Dendritic cell treated with granulocyte-macrophage colony-stimulating factor and Interleukin-4, amounts not matched to agents 40 ng/mL and 50 ng/mL, for 4 days (primary cell): ENCODE measurements at regions of chr1 and their contacts with region 1.

Region 1: GRCh38 chr1:37553927-37554808 is at the start of gene SNIP1:
- H3K4me3 Mint-ChIP-seq: peak within 1 kb of the TSS; percentile 93
- H3K27ac Mint-ChIP-seq: peak within 1 kb of the TSS; percentile 93
- H3K4me1 Mint-ChIP-seq: peaks cover 31% of the 10 kb centered on the region
- H3K27me3 Mint-ChIP-seq: no peaks in the 10 kb centered on the region

Region 2: DNA sequence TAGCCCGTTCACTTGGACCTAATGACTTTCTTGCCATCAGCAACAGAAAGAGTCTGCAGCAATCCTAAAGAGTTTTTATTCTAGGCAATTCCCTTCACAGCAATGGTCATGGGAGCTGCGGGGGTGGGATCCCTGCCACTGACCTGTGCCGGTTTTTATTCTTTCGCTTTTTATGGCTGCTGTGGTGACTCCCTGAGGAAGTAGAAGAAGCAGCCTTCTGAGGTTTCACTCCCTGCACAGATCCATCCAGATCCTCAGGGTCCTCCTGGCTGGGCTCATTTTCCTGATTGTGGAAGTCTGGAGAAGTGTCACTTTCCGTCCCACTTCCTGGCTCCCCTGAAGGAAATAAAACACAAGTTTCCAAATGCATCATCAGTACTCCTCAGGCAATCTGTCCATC is 52.5 kb before region 1 on chr1:
- intact Hi-C with region 1: no loop called
- H3K4me3 Mint-ChIP-seq: no peak overlapping the region
- H3K27ac Mint-ChIP-seq: no peak overlapping the region
- H3K4me1 Mint-ChIP-seq: no peaks in the 10 kb centered on the region
- H3K27me3 Mint-ChIP-seq: no peaks in the 10 kb centered on the region

Region 3: GRCh38 chr1:37514350-37515184 is 39.6 kb before region 1 on chr1 and contains the start of gene MEAF6:
- intact Hi-C with region 1: loop called (anchors 1 kb)
- H3K4me3 Mint-ChIP-seq: peak within 1 kb of the TSS; percentile 96
- H3K27ac Mint-ChIP-seq: peak within 1 kb of the TSS; percentile 98
- H3K4me1 Mint-ChIP-seq: peaks cover 40% of the 10 kb centered on the region
- H3K27me3 Mint-ChIP-seq: no peaks in the 10 kb centered on the region

Region 4: DNA sequence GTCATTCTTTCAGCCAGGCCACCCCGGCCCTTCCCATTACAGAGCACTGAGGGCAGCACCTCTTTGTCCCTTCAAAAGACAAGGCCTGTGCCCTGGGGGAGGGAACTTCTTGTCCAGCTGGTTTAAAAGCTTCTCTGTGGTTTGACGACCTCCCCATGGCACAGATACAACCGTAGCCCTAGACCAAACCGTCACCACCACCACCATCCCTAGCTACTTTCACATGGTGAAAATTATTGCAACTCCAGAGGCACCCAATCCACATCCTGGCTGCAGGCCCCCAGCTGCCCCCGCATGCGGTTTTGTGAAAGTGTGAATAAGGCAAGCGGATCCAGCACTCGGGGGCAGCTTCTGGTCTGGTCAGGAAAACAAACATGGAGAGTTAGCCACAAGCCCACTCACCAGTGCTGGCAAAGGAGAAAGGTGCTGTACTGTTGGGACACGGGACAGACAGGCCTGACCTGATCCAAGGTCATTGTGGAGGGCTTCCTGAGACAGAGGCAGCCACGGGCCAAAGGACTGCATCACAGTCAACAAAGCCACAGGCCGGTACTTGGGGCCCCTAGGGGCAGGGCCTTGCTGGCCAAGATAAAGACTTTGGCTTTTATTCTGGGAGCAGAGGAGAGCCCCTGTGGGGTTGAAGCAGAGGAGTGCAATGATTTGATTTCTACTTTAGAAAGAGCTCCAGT is 169.4 kb after region 1 on chr1:
- intact Hi-C with region 1: no loop called
- H3K4me3 Mint-ChIP-seq: no peak overlapping the region
- H3K27ac Mint-ChIP-seq: no peak overlapping the region
- H3K4me1 Mint-ChIP-seq: no peaks in the 10 kb centered on the region
- H3K27me3 Mint-ChIP-seq: peaks cover 20% of the 10 kb centered on the region